ENCODE measurements at regions of chr19 and their contacts with region 1.

Region 1: DNA sequence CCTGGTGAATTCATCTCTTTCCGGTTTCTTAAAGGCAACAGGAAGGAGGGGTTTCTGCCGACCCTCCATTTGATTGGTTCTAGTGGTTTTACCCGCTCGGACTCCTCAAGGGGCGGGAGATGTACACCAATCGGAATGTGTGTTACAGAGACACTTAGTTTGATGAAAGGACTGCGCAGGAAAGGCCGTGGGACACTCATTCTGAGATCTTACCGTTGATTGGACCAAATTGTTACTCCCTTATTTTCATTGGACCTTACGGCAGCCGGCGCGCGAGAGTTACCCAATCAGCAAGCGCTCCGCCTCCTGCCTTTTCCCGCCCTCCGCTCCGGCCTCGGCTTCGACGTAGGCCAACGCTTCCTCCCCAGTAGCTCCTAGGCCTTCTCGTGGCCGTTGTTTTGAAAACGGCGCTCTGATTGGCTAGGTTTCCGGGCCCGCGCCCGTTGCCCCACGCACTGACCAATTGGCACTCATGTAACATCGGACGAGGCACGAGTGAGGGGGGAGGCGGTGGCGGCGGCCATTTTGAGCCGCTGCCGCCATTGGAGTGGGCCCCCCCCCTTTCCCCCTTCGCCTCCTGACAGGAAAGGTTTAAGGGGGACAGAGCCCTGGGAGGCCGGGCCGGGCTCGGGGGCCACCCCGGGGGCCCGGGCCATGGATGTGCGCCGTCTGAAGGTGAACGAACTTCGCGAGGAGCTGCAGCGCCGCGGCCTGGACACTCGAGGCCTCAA is at the start of gene HNRNPUL1:
- DNase-seq: peak; percentile 99
- H3K4me3 Mint-ChIP-seq: peak within 1 kb of the TSS; percentile 97
- H3K27ac Mint-ChIP-seq: peak within 1 kb of the TSS; percentile 100
- H3K4me1 Mint-ChIP-seq: peaks cover 46% of the 10 kb centered on the region
- H3K27me3 Mint-ChIP-seq: peaks cover 4% of the 10 kb centered on the region
- total RNA-seq, gene HNRNPUL1: 290 to 295 TPM

Region 2: GRCh38 chr19:40716655-40717324 is 547.2 kb before region 1 on chr19 and contains the starts of genes COQ8B and ITPKC:
- CTCF ChIA-PET with region 1: no interaction called
- POLR2A ChIA-PET with region 1: no interaction called
- intact Hi-C with region 1: loop called (anchors 1 kb)
- DNase-seq: peak; percentile 100
- H3K4me3 Mint-ChIP-seq: peak within 1 kb of the TSS; percentile 93
- H3K27ac Mint-ChIP-seq: peak within 1 kb of the TSS; percentile 97
- H3K4me1 Mint-ChIP-seq: peaks cover 54% of the 10 kb centered on the region
- H3K27me3 Mint-ChIP-seq: no peaks in the 10 kb centered on the region
- total RNA-seq, gene COQ8B: 31.7 to 36.3 TPM
- total RNA-seq, gene ITPKC: 6.4 TPM

Region 3: DNA sequence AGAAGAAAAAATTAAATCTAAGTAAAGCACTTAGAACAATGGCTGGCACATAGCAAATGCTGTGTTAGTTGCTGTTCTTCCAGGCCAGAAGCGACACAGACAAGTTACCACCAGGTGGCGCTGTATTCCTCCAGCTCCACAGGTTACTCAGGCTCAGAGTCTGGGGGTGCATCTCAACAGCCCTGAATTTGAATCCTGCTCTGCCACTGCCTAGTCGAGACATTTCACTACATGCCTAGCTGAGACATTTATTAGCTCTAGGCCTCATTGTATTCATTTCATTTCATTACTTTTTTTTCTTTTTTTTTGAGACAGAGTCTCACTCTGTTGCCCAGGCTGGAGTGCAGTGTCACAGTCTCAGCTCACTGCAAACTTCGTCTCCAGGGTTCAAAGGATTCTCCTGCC is 289.4 kb before region 1 on chr19:
- CTCF ChIA-PET with region 1: no interaction called
- POLR2A ChIA-PET with region 1: no interaction called
- intact Hi-C with region 1: loop called (anchors 1 kb)
- DNase-seq: peak; percentile 83
- H3K4me3 Mint-ChIP-seq: no peak overlapping the region
- H3K27ac Mint-ChIP-seq: no peak overlapping the region
- H3K4me1 Mint-ChIP-seq: peaks cover 26% of the 10 kb centered on the region
- H3K27me3 Mint-ChIP-seq: peaks cover 6% of the 10 kb centered on the region

Region 4: DNA sequence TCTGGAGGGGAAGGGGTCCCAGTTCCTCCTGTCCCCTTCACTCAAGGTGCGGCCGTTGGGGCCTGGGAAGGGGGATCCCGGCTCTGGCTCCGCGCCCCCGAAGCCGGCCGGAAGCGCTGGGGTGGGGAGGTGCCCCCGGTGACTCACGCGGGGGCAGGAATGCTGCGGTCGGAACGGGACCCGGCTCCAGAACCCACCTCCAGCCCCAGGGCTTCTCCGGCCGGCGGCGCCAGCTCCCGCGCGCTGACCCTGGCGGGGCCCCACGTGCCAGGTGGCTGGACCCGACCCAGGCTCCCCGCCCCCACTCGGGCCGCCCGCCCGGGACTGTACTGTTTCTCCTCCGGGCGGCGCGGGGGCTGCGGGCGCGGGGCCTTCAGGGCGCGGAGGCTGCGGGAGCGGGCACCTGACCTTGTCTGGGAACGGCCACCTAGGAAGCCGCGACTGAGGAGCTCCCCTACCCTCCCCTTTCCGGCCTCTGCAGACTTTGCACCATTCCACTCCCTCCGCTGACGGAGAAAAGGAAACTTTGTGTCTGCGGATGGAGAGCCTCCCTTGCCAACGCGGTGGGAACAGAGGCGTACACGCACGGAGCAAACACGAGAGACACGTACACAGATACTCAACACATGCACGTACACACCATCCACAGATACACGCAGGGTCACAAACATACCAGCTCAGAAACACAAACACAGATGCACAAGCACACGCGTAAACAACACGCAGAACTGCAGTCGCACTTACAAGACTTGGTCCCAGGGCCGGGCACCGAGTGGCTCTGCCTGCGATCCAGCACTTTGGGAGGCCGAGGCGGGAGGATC is 37.8 kb before region 1 on chr19:
- CTCF ChIA-PET with region 1: interaction called, 16 read pairs
- POLR2A ChIA-PET with region 1: interaction called, 8 read pairs
- intact Hi-C with region 1: loop called (anchors 1 kb)
- DNase-seq: peak; percentile 69
- H3K4me3 Mint-ChIP-seq: peak overlapping the region; percentile 85
- H3K27ac Mint-ChIP-seq: peak overlapping the region; percentile 81
- H3K4me1 Mint-ChIP-seq: peaks cover 16% of the 10 kb centered on the region
- H3K27me3 Mint-ChIP-seq: peaks cover 3% of the 10 kb centered on the region

Region 5: DNA sequence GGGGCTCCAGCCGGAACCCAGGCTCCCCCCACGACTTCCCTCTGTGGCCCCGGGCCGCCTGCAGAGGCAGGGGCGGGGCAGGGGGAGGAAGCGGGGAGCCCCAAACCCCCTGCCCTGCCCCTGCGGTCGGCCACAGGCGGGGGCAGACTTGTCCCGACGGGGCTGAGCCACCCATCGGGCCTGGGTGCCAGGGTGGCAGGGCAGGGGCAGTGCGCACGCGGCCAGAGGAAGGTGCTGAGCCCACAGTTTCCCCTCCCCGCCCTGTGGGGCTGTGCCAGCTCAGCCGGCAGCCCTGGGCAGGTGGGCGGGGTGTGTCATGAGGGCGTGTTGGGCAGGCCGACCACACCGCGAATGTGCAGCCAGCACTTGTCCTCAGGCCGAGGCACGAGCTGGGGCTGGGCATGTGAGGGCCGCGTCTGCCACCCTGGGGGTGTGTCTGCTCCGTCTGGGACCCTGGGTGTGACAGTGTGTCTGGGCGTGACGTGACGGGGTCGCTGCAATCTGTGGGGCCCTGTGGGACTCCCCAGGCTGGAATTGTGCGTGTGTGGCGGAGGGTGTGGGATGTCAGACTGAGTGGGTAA is 63.7 kb after region 1 on chr19:
- CTCF ChIA-PET with region 1: interaction called, 3 read pairs
- POLR2A ChIA-PET with region 1: interaction called, 22 read pairs
- intact Hi-C with region 1: loop called (anchors 1 kb)
- DNase-seq: peak; percentile 93
- H3K4me3 Mint-ChIP-seq: peak overlapping the region; percentile 80
- H3K27ac Mint-ChIP-seq: peak overlapping the region; percentile 96
- H3K4me1 Mint-ChIP-seq: peaks cover 56% of the 10 kb centered on the region
- H3K27me3 Mint-ChIP-seq: no peaks in the 10 kb centered on the region

Region 6: DNA sequence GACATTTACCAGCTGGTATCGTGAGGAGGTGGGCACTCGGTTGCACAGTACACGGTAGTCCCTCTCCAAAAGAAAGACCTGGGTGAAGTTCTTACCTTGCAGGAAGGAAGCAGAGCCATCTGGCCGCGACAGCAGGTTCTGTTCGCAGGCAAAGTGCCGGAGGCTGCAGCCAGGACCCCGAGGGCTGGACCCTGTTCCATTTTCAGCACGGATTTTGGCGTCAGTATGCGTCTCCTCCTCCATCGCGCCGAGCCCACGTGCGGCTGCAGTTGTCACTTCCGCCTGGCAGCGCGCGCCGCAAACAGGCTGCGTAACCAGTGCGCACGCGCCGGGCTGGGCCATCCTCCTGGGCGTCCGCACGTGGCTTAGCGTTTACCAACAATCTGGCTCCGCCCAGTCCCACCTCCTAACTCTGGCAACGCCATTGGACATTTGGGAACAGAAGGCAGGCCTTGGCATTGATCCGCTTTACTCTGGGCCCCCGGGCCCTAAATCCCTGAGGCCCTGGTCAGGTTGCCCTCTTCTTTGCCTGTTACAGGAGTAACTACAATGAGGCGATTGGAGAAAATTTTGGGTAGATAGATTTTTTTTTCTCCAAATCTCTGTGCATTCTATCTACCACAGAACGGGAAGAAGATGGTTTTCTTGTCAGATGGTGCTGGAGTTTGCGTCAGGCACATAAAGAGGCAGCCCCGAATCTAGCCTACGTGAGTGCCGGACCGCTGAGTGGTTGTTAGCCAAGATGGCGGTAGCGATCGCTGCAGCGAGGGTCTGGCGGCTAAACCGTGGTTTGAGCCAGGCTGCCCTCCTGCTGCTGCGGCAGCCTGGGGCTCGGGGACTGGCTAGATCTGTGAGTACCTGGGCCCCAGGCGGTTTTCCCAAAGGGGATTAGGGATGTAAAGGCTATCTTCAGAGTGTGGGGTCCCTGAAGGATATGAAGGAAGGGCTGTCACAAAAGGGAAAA is 133.4 kb after region 1 on chr19 and contains the starts of genes BCKDHA and EXOSC5:
- CTCF ChIA-PET with region 1: interaction called, 3 read pairs
- POLR2A ChIA-PET with region 1: no interaction called
- intact Hi-C with region 1: loop called (anchors 1 kb)
- DNase-seq: peak; percentile 99
- H3K4me3 Mint-ChIP-seq: peak within 1 kb of the TSS; percentile 96
- H3K27ac Mint-ChIP-seq: peak within 1 kb of the TSS; percentile 98
- H3K4me1 Mint-ChIP-seq: peaks cover 41% of the 10 kb centered on the region
- H3K27me3 Mint-ChIP-seq: no peaks in the 10 kb centered on the region
- total RNA-seq, gene BCKDHA: 17.4 to 23.2 TPM
- total RNA-seq, gene EXOSC5: 43.0 to 45.5 TPM

Measured in activated CD4-positive, alpha-beta memory T cell treated with anti-CD3 and anti-CD28 coated beads for 36 hours (primary cell).